HepG2 (cell line): ENCODE measurements at regions of chr7 and their contacts with region 1.

Region 1: GRCh38 chr7:138352570-138353461 is 107.2 kb upstream of the TRIM24 start:
- DNase-seq: peak; percentile 100
- ATAC-seq: peak; percentile 99
- H3K4me3 ChIP-seq: peak overlapping the region; percentile 43 to 52 (median 46)
- H3K27ac ChIP-seq: peak overlapping the region; percentile 99
- H3K4me1 ChIP-seq: peaks cover 29% of the 10 kb centered on the region
- H3K27me3 ChIP-seq: no peaks in the 10 kb centered on the region
- CTCF ChIP-seq: no peak; the same call in 1 of the 2 replicates
- EP300 ChIP-seq: peak; percentile 83 to 99; a peak in 3 of 4 replicates
- POLR2A ChIP-seq: peak; percentile 68 to 86
- RAD21 ChIP-seq: peak; percentile 62

Region 2: DNA sequence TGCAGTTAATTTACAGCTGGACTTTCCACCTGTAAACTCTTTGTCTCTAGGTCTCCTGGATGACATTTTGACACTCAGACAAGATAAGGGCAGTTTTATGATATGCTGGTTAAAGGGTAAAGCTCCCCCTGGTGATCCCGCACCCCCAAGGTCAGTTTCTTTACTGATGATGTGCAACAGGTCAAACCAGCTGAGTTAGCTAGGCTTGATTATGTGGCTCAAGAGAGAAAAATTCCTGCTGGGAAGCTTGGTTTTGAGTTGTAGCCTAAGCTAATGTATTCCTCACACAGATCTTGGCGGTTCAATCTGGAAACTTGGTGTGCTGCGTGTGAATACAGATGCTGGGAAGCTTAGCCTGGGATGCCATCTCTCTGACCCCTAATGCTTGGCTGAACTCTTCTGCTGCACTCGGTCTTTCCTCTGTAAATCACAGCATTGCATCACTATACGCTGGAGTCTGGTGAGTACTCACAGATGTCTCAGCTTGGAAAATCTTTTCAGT is 287.9 kb before region 1 on chr7:
- CTCF ChIA-PET with region 1: no interaction called
- POLR2A ChIA-PET with region 1: no interaction called
- in situ Hi-C with region 1: no loop called
- intact Hi-C with region 1: loop called (anchors 1 kb)
- DNase-seq: peak; percentile 68
- ATAC-seq: peak; percentile 66
- H3K4me3 ChIP-seq: peak overlapping the region; percentile 16 to 57 (median 48)
- H3K27ac ChIP-seq: peak overlapping the region; percentile 80
- H3K4me1 ChIP-seq: peaks cover 95% of the 10 kb centered on the region
- H3K27me3 ChIP-seq: no peaks in the 10 kb centered on the region; a peak in 1 of 5 replicates
- CTCF ChIP-seq: peak; percentile 56
- EP300 ChIP-seq: peak in 1 of 2 experiments; percentile 72; a peak in 2 of 4 replicates
- POLR2A ChIP-seq: no peak
- RAD21 ChIP-seq: no peak

Region 3: GRCh38 chr7:138161600-138162081 is 191.2 kb before region 1 on chr7:
- CTCF ChIA-PET with region 1: no interaction called
- POLR2A ChIA-PET with region 1: no interaction called
- in situ Hi-C with region 1: no loop called
- intact Hi-C with region 1: loop called (anchors 1 kb)
- DNase-seq: peak; percentile 95
- ATAC-seq: peak; percentile 88
- H3K4me3 ChIP-seq: no peak overlapping the region; a peak in 1 of 6 replicates
- H3K27ac ChIP-seq: peak overlapping the region; percentile 21
- H3K4me1 ChIP-seq: peaks cover 59% of the 10 kb centered on the region
- H3K27me3 ChIP-seq: no peaks in the 10 kb centered on the region
- CTCF ChIP-seq: peak; percentile 94
- EP300 ChIP-seq: peak in 1 of 2 experiments; percentile 55; a peak in 2 of 4 replicates
- POLR2A ChIP-seq: no peak
- RAD21 ChIP-seq: peak; percentile 92

Region 4: GRCh38 chr7:138257459-138258196 is 95.2 kb before region 1 on chr7:
- CTCF ChIA-PET with region 1: no interaction called
- POLR2A ChIA-PET with region 1: interaction called, 9 read pairs
- in situ Hi-C with region 1: no loop called
- intact Hi-C with region 1: loop called (anchors 1 kb)
- DNase-seq: peak; percentile 99
- ATAC-seq: peak; percentile 95
- H3K4me3 ChIP-seq: no peak overlapping the region
- H3K27ac ChIP-seq: peak overlapping the region; percentile 93
- H3K4me1 ChIP-seq: peaks cover 43% of the 10 kb centered on the region
- H3K27me3 ChIP-seq: no peaks in the 10 kb centered on the region
- CTCF ChIP-seq: no peak
- EP300 ChIP-seq: peak; percentile 91 to 98
- POLR2A ChIP-seq: no peak
- RAD21 ChIP-seq: peak; percentile 83

Region 5: GRCh38 chr7:138388673-138389491 is 36.1 kb after region 1 on chr7:
- CTCF ChIA-PET with region 1: no interaction called
- POLR2A ChIA-PET with region 1: interaction called, 22 read pairs
- in situ Hi-C with region 1: no loop called
- intact Hi-C with region 1: loop called (anchors 2 kb)
- DNase-seq: peak; percentile 98
- ATAC-seq: peak; percentile 92
- H3K4me3 ChIP-seq: no peak overlapping the region
- H3K27ac ChIP-seq: peak overlapping the region; percentile 61
- H3K4me1 ChIP-seq: peaks cover 65% of the 10 kb centered on the region
- H3K27me3 ChIP-seq: no peaks in the 10 kb centered on the region
- CTCF ChIP-seq: no peak
- EP300 ChIP-seq: peak in 1 of 2 experiments; percentile 99; a peak in 2 of 4 replicates
- POLR2A ChIP-seq: no peak
- RAD21 ChIP-seq: no peak

Region 6: DNA sequence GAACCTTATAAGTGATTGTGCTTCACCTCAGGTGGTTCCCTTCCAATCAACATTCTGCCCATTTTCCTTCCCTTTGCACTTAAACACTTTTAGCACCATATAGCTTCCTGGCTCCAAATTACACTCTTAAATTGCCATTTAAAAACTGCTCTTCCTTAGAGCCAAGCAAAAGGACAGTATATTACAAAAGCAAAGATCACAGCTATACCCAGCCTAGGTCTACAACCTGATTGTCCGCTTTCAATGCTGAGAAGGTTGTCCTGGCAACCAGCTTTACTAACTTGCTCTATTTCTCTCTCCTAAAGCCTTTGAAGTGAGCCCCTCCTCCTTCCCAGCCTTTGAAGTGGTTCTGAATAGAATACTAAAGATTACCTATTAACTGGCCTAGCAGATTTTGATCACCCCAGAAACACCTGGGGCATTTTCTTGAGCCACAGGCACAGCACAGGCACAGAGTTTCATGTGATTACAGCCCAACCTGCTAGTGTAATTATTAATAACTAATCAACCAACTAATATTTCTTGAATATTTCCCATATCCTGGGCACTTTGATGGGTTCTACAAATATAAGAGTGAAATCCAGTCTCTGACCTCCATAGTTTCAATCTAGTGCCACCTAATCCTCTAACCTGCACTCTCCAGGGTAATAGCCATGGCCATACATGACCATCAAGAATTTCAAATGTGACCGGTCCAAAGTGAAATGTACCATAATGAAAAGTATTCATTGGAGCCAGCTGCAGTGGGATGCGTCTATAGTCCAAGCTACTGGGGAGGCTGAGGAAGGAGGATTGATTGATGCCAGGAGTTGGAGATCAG is 43.6 kb after region 1 on chr7:
- CTCF ChIA-PET with region 1: no interaction called
- POLR2A ChIA-PET with region 1: interaction called, 13 read pairs
- in situ Hi-C with region 1: no loop called
- intact Hi-C with region 1: no loop called
- DNase-seq: peak; percentile 100
- ATAC-seq: peak; percentile 99
- H3K4me3 ChIP-seq: peak overlapping the region in 2 of 3 experiments; percentile 4 to 38; a peak in 1 of 6 replicates
- H3K27ac ChIP-seq: peak overlapping the region; percentile 100
- H3K4me1 ChIP-seq: peaks cover 82% of the 10 kb centered on the region
- H3K27me3 ChIP-seq: no peaks in the 10 kb centered on the region
- CTCF ChIP-seq: no peak
- EP300 ChIP-seq: peak; percentile 79 to 99; a peak in 3 of 4 replicates
- POLR2A ChIP-seq: peak; percentile 34 to 39
- RAD21 ChIP-seq: peak; percentile 32; the same call in 1 of the 2 replicates